A549 (cell line): ENCODE measurements at regions of chr11 and their contacts with region 1.

Region 1: GRCh38 chr11:1652771-1653540 is 23.4 kb downstream of the KRTAP5-5 start:
- DNase-seq: peak; percentile 51 to 89
- ATAC-seq: peak; percentile 79 to 93
- H3K4me3 ChIP-seq: no peak overlapping the region
- H3K27ac ChIP-seq: peak overlapping the region in 1 of 2 experiments; percentile 26; a peak in 2 of 6 replicates
- H3K4me1 ChIP-seq: no peaks in the 10 kb centered on the region; the same call in 2 of the 3 replicates
- CTCF ChIP-seq: peak; percentile 93
- EP300 ChIP-seq: no peak
- POLR2A ChIP-seq: no peak
- RAD21 ChIP-seq: peak; percentile 94 to 97

Region 2: GRCh38 chr11:1041936-1042608 is 610.9 kb before region 1 on chr11:
- CTCF ChIA-PET with region 1: no interaction called
- POLR2A ChIA-PET with region 1: no interaction called
- DNase-seq: peak; percentile 44 to 46
- ATAC-seq: peak; percentile 49 to 80
- H3K4me3 ChIP-seq: no peak overlapping the region
- H3K27ac ChIP-seq: peak overlapping the region; percentile 58 to 82; a peak in 5 of 6 replicates
- H3K4me1 ChIP-seq: peaks cover 13% of the 10 kb centered on the region
- CTCF ChIP-seq: no peak
- EP300 ChIP-seq: no peak
- POLR2A ChIP-seq: no peak
- RAD21 ChIP-seq: peak; percentile 39 to 41; a peak in 3 of 5 replicates

Region 3: DNA sequence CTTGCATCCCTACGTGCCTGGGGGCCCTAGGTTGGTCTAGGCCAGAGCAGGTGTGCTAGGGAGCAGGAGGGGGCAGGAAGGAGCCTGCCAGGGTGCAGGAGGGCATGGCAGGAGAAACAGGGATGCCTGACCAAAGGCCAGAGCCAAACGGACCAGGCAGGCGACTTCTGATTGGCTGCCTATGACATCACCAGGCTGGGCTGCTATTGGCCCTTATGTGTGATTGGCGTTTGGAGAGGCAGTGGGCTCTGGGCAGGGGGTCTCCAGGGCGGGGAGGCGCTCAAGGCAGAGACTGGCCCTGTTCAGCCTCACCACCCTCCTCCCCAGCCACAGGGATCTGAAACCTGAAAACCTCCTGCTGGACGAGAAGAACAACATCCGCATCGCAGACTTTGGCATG is 210.8 kb before region 1 on chr11:
- CTCF ChIA-PET with region 1: no interaction called
- POLR2A ChIA-PET with region 1: no interaction called
- DNase-seq: peak; percentile 42 to 51
- ATAC-seq: peak in 1 of 2 experiments; percentile 38; a peak in 3 of 6 replicates
- H3K4me3 ChIP-seq: no peak overlapping the region
- H3K27ac ChIP-seq: no peak overlapping the region
- H3K4me1 ChIP-seq: peaks cover 4% of the 10 kb centered on the region; the same call in 1 of the 3 replicates
- CTCF ChIP-seq: no peak
- EP300 ChIP-seq: no peak
- POLR2A ChIP-seq: no peak
- RAD21 ChIP-seq: no peak

Region 4: DNA sequence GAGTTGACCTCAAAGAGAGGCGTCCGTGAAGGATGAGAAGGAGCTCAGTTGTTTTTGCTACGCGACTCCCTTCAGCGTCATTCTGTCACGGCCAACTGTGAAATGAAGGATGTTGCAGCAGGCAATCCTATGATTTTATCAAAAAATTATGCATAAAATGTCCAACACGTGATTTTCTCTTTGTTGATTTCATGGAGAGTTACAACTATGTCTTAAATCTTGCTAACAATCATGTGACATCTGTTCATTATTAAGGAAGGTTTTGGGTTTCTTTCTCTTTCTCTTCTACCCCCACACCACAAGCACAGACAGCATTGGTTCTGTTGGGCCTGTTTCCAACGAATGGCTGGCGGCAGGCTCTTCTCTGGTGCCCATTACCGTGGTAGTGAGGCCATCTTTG is 34.7 kb before region 1 on chr11:
- CTCF ChIA-PET with region 1: interaction called, 11 read pairs
- POLR2A ChIA-PET with region 1: no interaction called
- DNase-seq: no peak
- ATAC-seq: no peak
- H3K4me3 ChIP-seq: no peak overlapping the region
- H3K27ac ChIP-seq: no peak overlapping the region
- H3K4me1 ChIP-seq: no peaks in the 10 kb centered on the region
- CTCF ChIP-seq: no peak
- EP300 ChIP-seq: no peak
- POLR2A ChIP-seq: no peak
- RAD21 ChIP-seq: no peak

Region 5: GRCh38 chr11:1669661-1670218 is 16.8 kb after region 1 on chr11:
- CTCF ChIA-PET with region 1: interaction called, 41 read pairs
- POLR2A ChIA-PET with region 1: no interaction called
- DNase-seq: no peak
- ATAC-seq: no peak; a peak in 1 of 6 replicates
- H3K4me3 ChIP-seq: no peak overlapping the region
- H3K27ac ChIP-seq: no peak overlapping the region
- H3K4me1 ChIP-seq: no peaks in the 10 kb centered on the region
- CTCF ChIP-seq: no peak
- EP300 ChIP-seq: no peak
- POLR2A ChIP-seq: no peak
- RAD21 ChIP-seq: no peak

Region 6: GRCh38 chr11:1837171-1838076 is 184.5 kb after region 1 on chr11:
- CTCF ChIA-PET with region 1: interaction called, 108 read pairs
- POLR2A ChIA-PET with region 1: no interaction called
- DNase-seq: peak; percentile 59 to 70
- ATAC-seq: peak; percentile 46 to 87
- H3K4me3 ChIP-seq: no peak overlapping the region
- H3K27ac ChIP-seq: peak overlapping the region in 1 of 2 experiments; percentile 73; a peak in 3 of 6 replicates
- H3K4me1 ChIP-seq: peaks cover 24% of the 10 kb centered on the region
- CTCF ChIP-seq: peak; percentile 89
- EP300 ChIP-seq: no peak
- POLR2A ChIP-seq: no peak
- RAD21 ChIP-seq: peak; percentile 93 to 97

Region 7: DNA sequence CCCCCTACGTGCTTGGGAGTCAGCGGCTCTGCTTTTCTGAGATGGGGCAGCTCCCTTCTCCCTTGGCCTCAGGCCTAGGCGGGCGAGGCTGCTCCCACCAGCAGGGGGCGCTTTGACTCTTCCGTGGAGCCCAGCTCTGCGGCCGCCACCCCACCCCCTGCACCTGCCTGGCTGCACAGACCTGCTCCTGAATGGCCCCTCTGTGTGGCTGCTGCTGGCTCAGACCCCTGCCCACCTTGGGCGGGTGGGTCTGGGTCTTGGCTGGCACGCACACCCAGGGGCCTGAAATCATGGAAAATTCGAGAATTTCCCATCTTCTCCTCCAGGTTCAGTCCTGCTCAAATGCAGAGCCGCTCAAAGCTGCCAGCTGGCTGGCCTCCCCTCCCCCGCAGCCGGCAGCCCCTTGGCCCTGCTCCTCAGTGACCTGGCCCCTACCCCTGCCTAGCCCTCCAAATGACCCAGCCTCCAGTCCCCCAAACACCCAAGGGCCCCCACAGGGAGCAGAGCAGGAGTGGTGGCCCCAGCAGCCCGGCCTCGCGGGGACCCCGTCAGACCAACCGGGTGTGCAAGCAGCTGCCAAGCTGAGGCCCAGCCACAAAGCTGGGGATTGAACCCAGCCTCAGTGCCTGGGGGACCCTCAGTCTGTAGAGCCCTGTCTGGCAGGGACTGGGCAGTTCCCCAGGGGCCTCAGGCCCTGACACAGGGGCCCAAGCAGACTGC is 229.7 kb after region 1 on chr11:
- CTCF ChIA-PET with region 1: interaction called, 24 read pairs
- POLR2A ChIA-PET with region 1: no interaction called
- DNase-seq: peak; percentile 73 to 89
- ATAC-seq: peak; percentile 85 to 97
- H3K4me3 ChIP-seq: no peak overlapping the region
- H3K27ac ChIP-seq: no peak overlapping the region; a peak in 1 of 6 replicates
- H3K4me1 ChIP-seq: no peaks in the 10 kb centered on the region
- CTCF ChIP-seq: peak; percentile 81
- EP300 ChIP-seq: no peak
- POLR2A ChIP-seq: no peak
- RAD21 ChIP-seq: peak; percentile 87 to 89

Region 8: DNA sequence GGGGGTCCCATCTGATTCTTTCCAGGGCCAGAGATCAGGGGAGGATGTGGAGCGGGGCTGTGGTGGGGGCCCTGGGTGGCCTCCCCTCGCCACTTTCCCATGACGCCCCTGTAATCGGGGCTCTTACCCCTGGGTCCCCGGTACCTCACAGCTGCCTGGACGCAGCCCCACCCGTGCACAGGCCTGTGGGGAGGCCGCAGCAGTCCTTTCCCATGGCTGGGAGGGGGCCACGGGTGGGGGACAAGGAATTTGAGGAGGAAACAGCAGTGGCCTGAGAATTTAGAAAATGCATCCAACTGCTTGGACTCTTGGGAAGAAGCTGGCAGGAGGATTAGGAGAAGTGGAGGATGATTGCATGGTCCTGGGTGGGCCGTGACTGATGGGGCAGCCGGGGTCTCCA is 326.7 kb after region 1 on chr11:
- CTCF ChIA-PET with region 1: interaction called, 15 read pairs
- POLR2A ChIA-PET with region 1: no interaction called
- DNase-seq: no peak
- ATAC-seq: no peak
- H3K4me3 ChIP-seq: no peak overlapping the region
- H3K27ac ChIP-seq: no peak overlapping the region
- H3K4me1 ChIP-seq: no peaks in the 10 kb centered on the region
- CTCF ChIP-seq: no peak
- EP300 ChIP-seq: no peak
- POLR2A ChIP-seq: no peak
- RAD21 ChIP-seq: no peak

Region 9: DNA sequence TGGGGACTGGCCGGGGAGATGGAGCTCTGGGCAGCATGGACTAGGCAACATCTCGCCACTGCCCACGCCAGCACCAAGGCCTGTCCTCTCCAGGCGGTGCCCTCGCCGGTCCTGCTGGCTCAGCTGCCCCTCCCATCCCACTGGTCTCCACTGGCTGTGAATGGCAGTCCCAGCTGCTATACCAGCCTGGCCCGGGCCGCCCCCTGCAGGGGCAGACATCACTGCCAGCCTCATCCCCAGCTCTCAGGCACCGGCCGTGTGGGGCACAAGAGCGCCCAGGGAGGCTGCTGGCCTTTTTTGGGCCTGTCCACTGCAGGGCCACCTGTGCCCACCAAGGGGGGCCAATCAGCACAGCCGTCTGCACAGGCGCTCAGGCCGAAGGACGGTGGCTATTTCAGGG is 374.8 kb after region 1 on chr11:
- CTCF ChIA-PET with region 1: interaction called, 17 read pairs
- POLR2A ChIA-PET with region 1: no interaction called
- DNase-seq: no peak
- ATAC-seq: peak in 1 of 2 experiments; percentile 41; a peak in 2 of 6 replicates
- H3K4me3 ChIP-seq: no peak overlapping the region
- H3K27ac ChIP-seq: no peak overlapping the region
- H3K4me1 ChIP-seq: no peaks in the 10 kb centered on the region
- CTCF ChIP-seq: no peak
- EP300 ChIP-seq: no peak
- POLR2A ChIP-seq: no peak
- RAD21 ChIP-seq: no peak